HCT116 (cell line): ENCODE measurements at regions of chr11 and their contacts with region 1.

Region 1: GRCh38 chr11:113906038-113906437 is 1.4 kb downstream of the HTR3B start:
- DNase-seq: peak; percentile 45
- ATAC-seq: peak; percentile 92
- H3K4me3 ChIP-seq: no peak overlapping the region
- H3K27ac ChIP-seq: no peak overlapping the region
- H3K4me1 ChIP-seq: no peaks in the 10 kb centered on the region
- H3K27me3 ChIP-seq: peaks cover 15% of the 10 kb centered on the region; the same call in 1 of the 2 replicates
- CTCF ChIP-seq: peak; percentile 18 to 55 (median 46); a peak in 3 of 6 replicates
- POLR2A ChIP-seq: no peak
- RAD21 ChIP-seq: peak; percentile 36

Region 2: GRCh38 chr11:114017723-114018122 is 111.7 kb after region 1 on chr11:
- CTCF ChIA-PET with region 1: no interaction called
- POLR2A ChIA-PET with region 1: no interaction called
- RAD21 ChIA-PET with region 1: no interaction called
- intact Hi-C with region 1: no loop called
- DNase-seq: no peak
- ATAC-seq: no peak
- H3K4me3 ChIP-seq: no peak overlapping the region
- H3K27ac ChIP-seq: no peak overlapping the region
- H3K4me1 ChIP-seq: no peaks in the 10 kb centered on the region
- H3K27me3 ChIP-seq: 0 out of 2 replicates have a peak, but pooled peaks cover 4% of the 10 kb centered on the region
- CTCF ChIP-seq: no peak
- POLR2A ChIP-seq: no peak
- RAD21 ChIP-seq: no peak

Region 3: GRCh38 chr11:114159802-114160632 is 254.0 kb after region 1 on chr11:
- CTCF ChIA-PET with region 1: no interaction called
- POLR2A ChIA-PET with region 1: no interaction called
- RAD21 ChIA-PET with region 1: no interaction called
- intact Hi-C with region 1: loop called (anchors 10 kb)
- DNase-seq: peak; percentile 68
- ATAC-seq: peak; percentile 85
- H3K4me3 ChIP-seq: peak overlapping the region; percentile 5 to 8; a peak in 1 of 4 replicates
- H3K27ac ChIP-seq: no peak overlapping the region
- H3K4me1 ChIP-seq: peaks cover 17 to 21% of the 10 kb centered on the region in 2 experiments
- H3K27me3 ChIP-seq: peaks cover 71% of the 10 kb centered on the region
- CTCF ChIP-seq: no peak
- POLR2A ChIP-seq: no peak
- RAD21 ChIP-seq: 0 out of 2 replicates have a peak, but pooled peaks have one; percentile 13

Region 4: DNA sequence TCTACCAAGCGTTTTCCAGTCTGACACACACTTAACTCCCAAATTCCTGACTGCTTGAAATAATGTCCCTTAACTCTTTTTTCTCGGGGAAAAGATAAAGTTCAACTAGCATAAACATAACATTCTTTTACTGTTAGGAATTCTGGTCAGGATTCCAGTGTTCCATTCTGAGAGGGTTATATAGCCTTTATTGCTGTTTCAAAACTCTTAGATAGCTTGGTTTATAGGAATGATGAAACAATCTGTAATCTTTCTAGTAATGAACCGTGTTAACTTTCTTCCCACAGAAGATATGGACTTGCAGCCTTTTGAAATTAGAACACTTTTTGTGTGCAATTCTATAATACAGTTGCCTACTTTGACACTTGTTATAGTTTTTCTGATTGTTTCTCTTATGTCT is 541.9 kb after region 1 on chr11:
- CTCF ChIA-PET with region 1: no interaction called
- POLR2A ChIA-PET with region 1: no interaction called
- RAD21 ChIA-PET with region 1: no interaction called
- intact Hi-C with region 1: no loop called
- DNase-seq: no peak
- ATAC-seq: no peak
- H3K4me3 ChIP-seq: no peak overlapping the region
- H3K27ac ChIP-seq: no peak overlapping the region
- H3K4me1 ChIP-seq: no peaks in the 10 kb centered on the region
- H3K27me3 ChIP-seq: no peaks in the 10 kb centered on the region
- CTCF ChIP-seq: no peak
- POLR2A ChIP-seq: no peak
- RAD21 ChIP-seq: no peak